ENCODE measurements at regions of chr1 and their contacts with region 1.

Region 1: DNA sequence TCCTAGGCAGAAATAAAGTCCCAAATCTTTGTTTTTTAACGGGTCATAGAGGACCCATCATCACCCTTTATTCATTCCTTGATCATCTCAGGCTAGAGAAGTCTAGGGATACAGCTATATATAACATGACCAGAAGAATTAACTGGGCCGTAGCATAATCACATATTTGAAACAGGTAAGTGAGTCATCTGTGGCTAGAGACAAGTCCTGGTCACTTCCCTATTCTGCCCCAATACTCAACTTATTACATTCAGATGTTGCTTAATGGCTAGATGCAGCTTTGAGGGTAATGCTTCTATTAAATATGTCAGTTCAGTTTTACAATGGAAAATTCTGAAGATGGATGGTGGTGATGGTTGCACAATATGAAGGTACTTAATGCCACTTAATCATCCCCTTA is 47.0 kb downstream of the EXO1 start:
- DNase-seq: no peak
- ATAC-seq: no peak
- H3K4me3 Mint-ChIP-seq: no peak overlapping the region
- H3K27ac Mint-ChIP-seq: no peak overlapping the region
- H3K4me1 Mint-ChIP-seq: no peaks in the 10 kb centered on the region
- H3K27me3 Mint-ChIP-seq: no peaks in the 10 kb centered on the region

Region 2: GRCh38 chr1:241834733-241835377 is 60.2 kb before region 1 on chr1:
- CTCF ChIA-PET with region 1: no interaction called
- DNase-seq: no peak
- ATAC-seq: no peak
- H3K4me3 Mint-ChIP-seq: no peak overlapping the region
- H3K27ac Mint-ChIP-seq: no peak overlapping the region
- H3K4me1 Mint-ChIP-seq: peaks cover 6% of the 10 kb centered on the region
- H3K27me3 Mint-ChIP-seq: peaks cover 10% of the 10 kb centered on the region

Region 3: DNA sequence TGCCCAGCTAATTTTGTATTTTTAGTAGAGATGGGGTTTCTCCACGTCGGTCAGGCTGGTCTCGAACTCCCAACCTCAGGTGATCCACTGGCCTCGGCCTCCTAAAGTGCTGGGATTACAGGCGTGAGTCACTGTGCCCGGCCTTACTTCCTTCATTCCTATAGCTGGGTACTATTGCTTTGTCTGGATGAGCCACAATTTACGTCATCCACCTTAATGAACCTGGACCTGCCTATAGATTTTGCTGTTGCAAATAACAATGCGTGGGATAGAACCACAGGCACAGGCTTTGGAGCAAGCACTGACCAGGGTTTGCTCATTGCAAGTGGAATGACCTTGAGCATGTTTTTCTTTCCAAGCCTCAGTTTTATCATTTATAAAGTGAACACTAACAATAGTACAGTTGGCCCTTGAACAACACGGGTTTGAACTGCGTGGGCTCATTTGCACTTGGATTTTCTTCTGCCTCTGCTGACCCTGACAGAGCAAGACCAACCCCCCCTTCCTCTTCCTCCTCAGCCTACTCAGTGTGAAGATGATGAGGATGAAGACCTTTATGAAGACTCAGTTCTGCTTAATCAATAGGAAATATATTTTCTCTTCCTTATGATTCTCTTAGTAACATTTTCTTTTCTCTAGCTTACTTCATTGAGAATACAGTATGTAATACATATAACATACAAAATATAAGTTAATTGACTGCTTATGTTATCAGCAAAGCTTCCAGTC is 29.2 kb after region 1 on chr1:
- CTCF ChIA-PET with region 1: no interaction called
- DNase-seq: no peak
- ATAC-seq: no peak
- H3K4me3 Mint-ChIP-seq: no peak overlapping the region
- H3K27ac Mint-ChIP-seq: no peak overlapping the region
- H3K4me1 Mint-ChIP-seq: no peaks in the 10 kb centered on the region
- H3K27me3 Mint-ChIP-seq: no peaks in the 10 kb centered on the region

Region 4: GRCh38 chr1:241998412-241998921 is 103.5 kb after region 1 on chr1:
- CTCF ChIA-PET with region 1: interaction called, 11 read pairs
- DNase-seq: peak; percentile 66
- ATAC-seq: peak; percentile 85
- H3K4me3 Mint-ChIP-seq: peak overlapping the region; percentile 50
- H3K27ac Mint-ChIP-seq: no peak overlapping the region
- H3K4me1 Mint-ChIP-seq: peaks cover 6% of the 10 kb centered on the region
- H3K27me3 Mint-ChIP-seq: peaks cover 5% of the 10 kb centered on the region

Region 5: GRCh38 chr1:242055744-242056320 is 160.8 kb after region 1 on chr1:
- CTCF ChIA-PET with region 1: no interaction called
- DNase-seq: no peak
- ATAC-seq: no peak
- H3K4me3 Mint-ChIP-seq: no peak overlapping the region
- H3K27ac Mint-ChIP-seq: no peak overlapping the region
- H3K4me1 Mint-ChIP-seq: no peaks in the 10 kb centered on the region
- H3K27me3 Mint-ChIP-seq: peaks cover 5% of the 10 kb centered on the region

Measured in activated CD8-positive, alpha-beta memory T cell treated with anti-CD3 and anti-CD28 coated beads, Interleukin-2, amount 10 ng/mL, durations not matched to agents 7 days and 5 days (primary cell).